ENCODE measurements at regions of chr9 and their contacts with region 1.

Region 1: GRCh38 chr9:130682490-130683121 is 11.0 kb upstream of the EXOSC2 start:
- DNase-seq: peak; percentile 35 to 62 (median 52)
- H3K4me3 ChIP-seq: peak overlapping the region; percentile 87
- H3K4me3 Mint-ChIP-seq: peak overlapping the region; percentile 84 to 97 (median 94)
- H3K27ac ChIP-seq: no peak overlapping the region
- H3K27ac Mint-ChIP-seq: peak overlapping the region in 5 of 8 donors; percentile 64 to 96 (median 83)
- H3K4me1 ChIP-seq: no peaks in the 10 kb centered on the region
- H3K4me1 Mint-ChIP-seq: peaks cover 3 to 12% (median 8%) of the 10 kb centered on the region in 3 donors
- H3K27me3 ChIP-seq: no peaks in the 10 kb centered on the region
- H3K27me3 Mint-ChIP-seq: peaks cover 3 to 4% of the 10 kb centered on the region in 2 donors

Region 2: GRCh38 chr9:130461218-130461630 is 221.4 kb before region 1 on chr9:
- CTCF ChIA-PET with region 1: interaction called, 34 read pairs
- POLR2A ChIA-PET with region 1: no interaction called
- DNase-seq: peak; percentile 49 to 76 (median 62)
- H3K4me3 ChIP-seq: no peak overlapping the region
- H3K4me3 Mint-ChIP-seq: no peak overlapping the region
- H3K27ac ChIP-seq: no peak overlapping the region
- H3K27ac Mint-ChIP-seq: no peak overlapping the region
- H3K4me1 ChIP-seq: no peaks in the 10 kb centered on the region
- H3K4me1 Mint-ChIP-seq: no peaks in the 10 kb centered on the region
- H3K27me3 ChIP-seq: peaks cover 3% of the 10 kb centered on the region
- H3K27me3 Mint-ChIP-seq: peaks cover 14 to 20% of the 10 kb centered on the region in 2 donors

Region 3: GRCh38 chr9:130741831-130742449 is 59.3 kb after region 1 on chr9:
- CTCF ChIA-PET with region 1: no interaction called
- POLR2A ChIA-PET with region 1: no interaction called
- DNase-seq: no peak
- H3K4me3 ChIP-seq: no peak overlapping the region
- H3K4me3 Mint-ChIP-seq: no peak overlapping the region
- H3K27ac ChIP-seq: no peak overlapping the region
- H3K27ac Mint-ChIP-seq: peak overlapping the region in 1 of 8 donors; percentile 31
- H3K4me1 ChIP-seq: no peaks in the 10 kb centered on the region
- H3K4me1 Mint-ChIP-seq: peaks cover 3 to 30% (median 15%) of the 10 kb centered on the region in 3 donors
- H3K27me3 ChIP-seq: no peaks in the 10 kb centered on the region
- H3K27me3 Mint-ChIP-seq: no peaks in the 10 kb centered on the region

Region 4: GRCh38 chr9:130834371-130835311 is 152.0 kb after region 1 on chr9 and contains the start of gene ABL1:
- CTCF ChIA-PET with region 1: no interaction called
- POLR2A ChIA-PET with region 1: no interaction called
- DNase-seq: peak; percentile 51 to 85 (median 68)
- H3K4me3 ChIP-seq: peak within 1 kb of the TSS; percentile 47
- H3K4me3 Mint-ChIP-seq: peak within 1 kb of the TSS; percentile 92 to 98 (median 97)
- H3K27ac ChIP-seq: peak within 1 kb of the TSS; percentile 46
- H3K27ac Mint-ChIP-seq: peak within 1 kb of the TSS; percentile 75 to 100 (median 98)
- H3K4me1 ChIP-seq: peaks cover 13% of the 10 kb centered on the region
- H3K4me1 Mint-ChIP-seq: peaks cover 38 to 55% (median 42%) of the 10 kb centered on the region in 3 donors
- H3K27me3 ChIP-seq: no peaks in the 10 kb centered on the region
- H3K27me3 Mint-ChIP-seq: peaks cover 0 to 3% of the 10 kb centered on the region in 2 donors
- total RNA-seq, gene ABL1: 38.8 to 39.3 TPM